MCF 10A (cell line): ENCODE measurements at regions of chr19 and their contacts with region 1.

Region 1: DNA sequence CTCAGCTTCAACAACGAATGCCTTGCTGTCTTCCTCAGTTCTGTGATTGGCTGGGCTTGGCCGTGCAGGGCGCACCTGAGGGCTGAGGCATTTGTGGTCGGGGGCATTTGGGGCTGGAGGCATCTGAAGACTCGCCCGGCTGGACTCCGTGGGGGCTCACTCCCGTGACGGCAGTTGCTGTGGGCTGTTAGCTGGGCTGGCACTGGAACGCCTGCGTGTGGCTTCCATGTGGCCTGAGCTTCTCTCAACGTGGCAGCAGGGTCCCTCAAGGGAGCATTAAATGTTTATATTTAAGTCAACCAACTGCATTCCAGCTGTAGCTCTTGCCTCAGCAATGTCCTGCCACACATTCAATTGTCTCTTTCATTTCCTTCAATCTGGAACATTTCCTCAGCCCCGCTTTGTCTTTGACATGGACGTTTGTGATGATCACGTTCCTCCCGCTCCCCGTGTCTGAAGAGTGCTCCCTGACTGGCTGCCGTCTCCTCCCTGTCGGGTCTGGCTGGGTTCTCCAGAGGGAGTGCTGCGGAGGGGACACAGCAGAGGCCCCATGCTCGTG is 21.0 kb downstream of the CCDC8 start:
- DNase-seq: no peak
- H3K4me3 Mint-ChIP-seq: no peak overlapping the region
- H3K27ac Mint-ChIP-seq: no peak overlapping the region
- H3K4me1 Mint-ChIP-seq: no peaks in the 10 kb centered on the region
- H3K27me3 Mint-ChIP-seq: no peaks in the 10 kb centered on the region
- CTCF ChIP-seq: no peak

Region 2: GRCh38 chr19:46283771-46284170 is 108.6 kb before region 1 on chr19:
- CTCF ChIA-PET with region 1: interaction called, 15 read pairs
- POLR2A ChIA-PET with region 1: interaction called, 4 read pairs
- intact Hi-C with region 1: loop called (anchors 1 kb)
- DNase-seq: no peak
- H3K4me3 Mint-ChIP-seq: no peak overlapping the region
- H3K27ac Mint-ChIP-seq: no peak overlapping the region
- H3K4me1 Mint-ChIP-seq: peaks cover 4% of the 10 kb centered on the region
- H3K27me3 Mint-ChIP-seq: no peaks in the 10 kb centered on the region
- CTCF ChIP-seq: no peak

Region 3: GRCh38 chr19:46337487-46337886 is 54.8 kb before region 1 on chr19:
- CTCF ChIA-PET with region 1: no interaction called
- POLR2A ChIA-PET with region 1: no interaction called
- intact Hi-C with region 1: no loop called
- DNase-seq: no peak
- H3K4me3 Mint-ChIP-seq: no peak overlapping the region
- H3K27ac Mint-ChIP-seq: no peak overlapping the region
- H3K4me1 Mint-ChIP-seq: no peaks in the 10 kb centered on the region
- H3K27me3 Mint-ChIP-seq: no peaks in the 10 kb centered on the region
- CTCF ChIP-seq: no peak

Region 4: DNA sequence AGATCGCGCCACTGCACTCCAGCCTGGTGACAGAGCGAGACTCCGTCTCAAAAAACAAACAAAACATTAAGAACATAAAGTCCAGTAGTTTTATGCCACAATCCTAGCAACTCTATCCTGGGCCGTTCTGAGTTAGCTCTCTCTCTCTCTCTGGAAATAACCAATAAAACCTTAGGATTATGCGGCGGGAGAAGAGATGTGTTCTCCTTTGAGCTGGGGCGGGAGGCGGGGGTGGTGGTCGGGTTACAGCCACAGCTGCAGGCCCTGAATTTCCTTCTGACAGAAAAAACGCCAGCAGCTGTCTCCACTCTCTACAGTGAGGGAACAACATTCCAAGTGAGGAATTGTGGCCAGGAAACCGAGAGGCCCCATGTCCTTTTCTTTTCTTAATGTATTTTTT is 88.1 kb after region 1 on chr19:
- CTCF ChIA-PET with region 1: interaction called, 37 read pairs
- POLR2A ChIA-PET with region 1: interaction called, 3 read pairs
- intact Hi-C with region 1: no loop called
- DNase-seq: no peak
- H3K4me3 Mint-ChIP-seq: no peak overlapping the region
- H3K27ac Mint-ChIP-seq: no peak overlapping the region
- H3K4me1 Mint-ChIP-seq: peaks cover 14% of the 10 kb centered on the region
- H3K27me3 Mint-ChIP-seq: no peaks in the 10 kb centered on the region
- CTCF ChIP-seq: no peak

Region 5: DNA sequence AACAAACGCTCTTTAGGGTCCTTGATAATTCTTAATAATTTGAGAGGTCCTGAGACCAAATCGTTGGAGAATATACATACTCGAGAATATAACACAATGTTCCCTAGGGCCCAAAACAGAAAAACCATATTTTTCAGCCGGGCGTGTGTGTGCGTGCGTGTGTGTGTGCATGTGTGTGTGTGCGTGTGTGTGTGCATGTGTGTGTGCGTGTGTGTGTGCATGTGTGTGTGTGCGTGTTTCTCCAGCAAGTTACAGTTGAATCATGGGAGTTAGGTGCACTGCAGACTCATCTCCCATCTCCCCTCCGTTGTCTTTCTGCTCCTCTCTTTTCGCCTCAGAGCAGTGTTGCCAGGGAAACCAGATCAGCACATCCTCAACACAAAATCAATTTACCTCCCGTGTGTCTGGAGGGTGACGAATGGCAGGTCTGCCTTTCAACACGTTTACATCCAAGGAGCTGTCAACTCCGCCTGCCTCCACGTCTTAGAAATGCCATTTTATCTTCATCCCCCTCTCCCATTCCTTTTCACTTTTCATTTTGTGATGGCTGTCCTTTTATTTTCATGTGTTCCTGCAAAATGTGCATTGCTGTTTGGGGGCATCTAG is 111.6 kb after region 1 on chr19:
- CTCF ChIA-PET with region 1: interaction called, 16 read pairs
- POLR2A ChIA-PET with region 1: no interaction called
- intact Hi-C with region 1: no loop called
- DNase-seq: no peak
- H3K4me3 Mint-ChIP-seq: no peak overlapping the region
- H3K27ac Mint-ChIP-seq: no peak overlapping the region
- H3K4me1 Mint-ChIP-seq: peaks cover 6% of the 10 kb centered on the region
- H3K27me3 Mint-ChIP-seq: peaks cover 15% of the 10 kb centered on the region
- CTCF ChIP-seq: no peak

Region 6: DNA sequence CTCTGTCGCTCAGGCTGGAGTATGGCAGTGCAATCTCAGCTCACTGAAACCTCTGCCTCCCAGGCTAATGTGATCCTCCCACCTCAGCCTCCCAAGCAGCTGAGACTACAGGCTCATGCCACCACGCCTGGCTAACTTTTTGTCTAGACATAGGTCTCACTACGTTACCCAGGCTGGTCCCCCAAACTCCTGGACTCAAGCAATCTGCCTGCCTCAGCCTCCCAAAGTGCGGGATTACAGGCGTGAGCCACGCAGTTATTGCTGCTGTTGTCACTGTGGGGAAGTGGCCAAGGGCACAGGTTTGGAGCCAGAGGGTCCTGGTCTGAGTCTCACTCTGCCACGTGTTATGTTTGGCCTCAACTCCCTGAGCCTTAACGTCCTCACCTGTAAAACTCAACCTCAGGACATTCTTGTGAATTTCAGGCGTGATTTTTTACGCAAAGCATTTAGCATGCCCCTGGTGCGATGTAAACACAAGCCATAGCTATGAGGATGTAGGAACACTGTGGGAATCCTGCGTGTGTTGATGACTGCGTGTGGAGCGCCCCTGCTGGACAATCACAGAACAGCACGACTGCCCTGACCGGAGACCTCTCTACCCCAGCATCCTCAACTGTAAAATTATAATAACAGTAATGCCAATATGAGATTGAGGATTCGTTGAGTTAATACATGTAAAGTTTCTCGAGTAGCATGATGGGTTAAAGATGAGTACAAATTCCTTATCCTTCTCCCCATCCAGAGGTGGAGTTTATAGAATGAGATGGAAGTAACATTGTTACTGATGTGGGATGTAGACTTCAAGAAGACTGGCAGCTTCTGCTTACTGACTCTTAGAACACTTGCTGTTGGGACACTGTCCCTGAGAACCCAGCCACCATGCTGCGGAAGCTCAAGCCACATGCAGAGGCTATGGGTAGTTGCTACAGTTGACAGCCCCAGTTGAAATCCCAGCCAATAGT is 145.1 kb after region 1 on chr19:
- CTCF ChIA-PET with region 1: interaction called, 11 read pairs
- POLR2A ChIA-PET with region 1: no interaction called
- intact Hi-C with region 1: no loop called
- DNase-seq: peak; percentile 53
- H3K4me3 Mint-ChIP-seq: no peak overlapping the region
- H3K27ac Mint-ChIP-seq: no peak overlapping the region
- H3K4me1 Mint-ChIP-seq: no peaks in the 10 kb centered on the region
- H3K27me3 Mint-ChIP-seq: no peaks in the 10 kb centered on the region
- CTCF ChIP-seq: peak; percentile 91